WTC11 (cell line): ENCODE measurements at regions of chr12 and their contacts with region 1.

Region 1: GRCh38 chr12:18261253-18261652 is at the start of gene PIK3C2G:
- DNase-seq: no peak
- ATAC-seq: no peak
- H3K4me3 Mint-ChIP-seq: no peak within 1 kb of the TSS
- H3K27ac Mint-ChIP-seq: peak within 1 kb of the TSS; percentile 51; the same call in 1 of the 2 replicates
- H3K4me1 Mint-ChIP-seq: peaks cover 15% of the 10 kb centered on the region
- H3K27me3 Mint-ChIP-seq: no peaks in the 10 kb centered on the region
- CTCF ChIP-seq: no peak
- total RNA-seq, gene PIK3C2G: not detected in 3 replicates

Region 2: DNA sequence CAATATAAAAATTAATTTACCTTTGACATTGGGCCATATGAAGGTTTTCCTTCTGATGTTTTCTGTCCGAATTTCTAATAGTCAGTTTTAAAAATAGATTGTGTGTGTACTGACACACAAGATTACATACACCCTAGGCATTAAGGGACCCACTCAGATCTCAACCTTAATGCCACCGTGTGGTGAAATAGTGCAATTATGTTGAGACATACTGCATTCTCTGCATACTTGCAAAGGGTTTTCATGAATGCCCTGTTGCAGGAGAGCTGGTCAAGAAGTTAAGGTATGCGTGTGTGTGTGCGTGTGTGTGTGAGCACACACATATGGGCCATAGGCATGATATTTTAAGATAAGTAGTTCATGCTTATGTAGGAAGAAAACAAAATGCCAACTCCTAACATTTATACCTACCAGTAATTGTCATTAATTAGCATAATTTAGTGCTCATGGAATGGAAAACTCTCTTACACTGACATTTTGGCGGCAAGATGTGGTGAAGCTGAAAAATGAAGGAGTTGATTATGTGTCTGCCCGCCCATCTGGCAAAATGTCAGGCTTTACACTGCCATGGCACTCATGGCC is 58.9 kb after region 1 on chr12:
- CTCF ChIA-PET with region 1: interaction called, 15 read pairs
- POLR2A ChIA-PET with region 1: no interaction called
- DNase-seq: peak; percentile 28
- ATAC-seq: peak; percentile 99
- H3K4me3 Mint-ChIP-seq: no peak overlapping the region
- H3K27ac Mint-ChIP-seq: no peak overlapping the region; the same call in 1 of the 2 replicates
- H3K4me1 Mint-ChIP-seq: peaks cover 7% of the 10 kb centered on the region
- H3K27me3 Mint-ChIP-seq: no peaks in the 10 kb centered on the region
- CTCF ChIP-seq: no peak

Region 3: DNA sequence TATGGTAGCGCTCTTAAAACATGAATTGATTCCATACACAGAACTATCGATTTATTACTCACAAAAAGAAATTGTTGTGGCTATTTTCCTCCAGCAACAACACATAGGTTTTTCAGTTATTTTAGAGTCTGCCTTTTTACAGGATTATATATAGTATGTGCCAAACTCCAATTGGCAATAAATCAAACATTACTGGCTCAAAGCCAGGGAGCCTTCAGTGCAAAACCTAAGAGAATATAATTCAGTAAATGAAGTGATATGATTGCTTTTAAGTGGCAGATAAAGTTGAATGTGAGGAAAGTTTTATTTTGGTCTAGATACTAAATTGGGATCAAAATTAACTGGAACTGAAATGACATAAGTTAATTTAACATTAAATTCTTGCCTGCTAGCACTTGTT is 234.9 kb after region 1 on chr12:
- CTCF ChIA-PET with region 1: no interaction called
- POLR2A ChIA-PET with region 1: no interaction called
- DNase-seq: no peak
- ATAC-seq: no peak
- H3K4me3 Mint-ChIP-seq: no peak overlapping the region
- H3K27ac Mint-ChIP-seq: no peak overlapping the region
- H3K4me1 Mint-ChIP-seq: no peaks in the 10 kb centered on the region
- H3K27me3 Mint-ChIP-seq: no peaks in the 10 kb centered on the region
- CTCF ChIP-seq: no peak